SK-N-SH (cell line): ENCODE measurements at regions of chr19 and their contacts with region 1.

Region 1: DNA sequence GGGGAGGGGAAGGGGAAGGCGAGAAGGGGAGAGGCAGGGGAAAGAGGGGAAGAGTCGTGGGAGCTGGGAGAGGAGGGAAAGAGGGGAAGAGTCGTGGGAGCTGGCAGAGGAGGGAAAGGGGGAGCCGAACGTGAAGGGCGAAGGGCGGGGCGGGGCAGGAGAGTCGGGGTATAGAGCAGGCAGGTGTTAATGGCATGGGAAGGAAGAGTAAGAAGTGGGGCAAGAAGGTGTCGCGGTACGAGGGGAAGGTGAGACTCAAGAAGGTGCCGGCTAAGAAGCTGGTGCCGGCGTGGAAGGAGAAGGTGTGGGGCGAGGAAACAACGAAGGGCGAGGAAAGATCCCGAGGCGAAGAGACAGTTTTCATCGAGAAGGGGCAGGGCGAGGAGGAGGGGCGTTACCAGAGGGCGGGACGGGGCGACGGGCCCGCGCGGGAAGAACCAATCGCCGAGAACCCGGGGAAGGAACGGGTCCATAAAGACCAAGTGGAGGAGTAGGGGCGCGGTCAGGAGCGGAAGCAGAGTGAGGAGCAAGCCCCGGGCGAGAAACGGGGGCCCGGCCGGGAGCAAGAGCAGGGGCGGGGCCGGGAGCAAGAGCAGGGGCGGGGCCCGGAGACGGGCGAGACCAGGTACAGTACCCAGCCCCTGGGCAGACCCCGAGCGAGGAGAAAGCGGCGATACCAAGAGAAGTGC is 463 bp downstream of the CATSPERG start:
- DNase-seq: peak; percentile 92
- H3K4me3 ChIP-seq: peak overlapping the region; percentile 68 to 96
- H3K27ac ChIP-seq: peak overlapping the region; percentile 82 to 86
- H3K4me1 ChIP-seq: peaks cover 0 to 8% of the 10 kb centered on the region in 2 experiments; a peak in 1 of 4 replicates
- H3K27me3 ChIP-seq: no peaks in the 10 kb centered on the region
- CTCF ChIP-seq: no peak
- EP300 ChIP-seq: no peak
- RAD21 ChIP-seq: no peak

Region 2: DNA sequence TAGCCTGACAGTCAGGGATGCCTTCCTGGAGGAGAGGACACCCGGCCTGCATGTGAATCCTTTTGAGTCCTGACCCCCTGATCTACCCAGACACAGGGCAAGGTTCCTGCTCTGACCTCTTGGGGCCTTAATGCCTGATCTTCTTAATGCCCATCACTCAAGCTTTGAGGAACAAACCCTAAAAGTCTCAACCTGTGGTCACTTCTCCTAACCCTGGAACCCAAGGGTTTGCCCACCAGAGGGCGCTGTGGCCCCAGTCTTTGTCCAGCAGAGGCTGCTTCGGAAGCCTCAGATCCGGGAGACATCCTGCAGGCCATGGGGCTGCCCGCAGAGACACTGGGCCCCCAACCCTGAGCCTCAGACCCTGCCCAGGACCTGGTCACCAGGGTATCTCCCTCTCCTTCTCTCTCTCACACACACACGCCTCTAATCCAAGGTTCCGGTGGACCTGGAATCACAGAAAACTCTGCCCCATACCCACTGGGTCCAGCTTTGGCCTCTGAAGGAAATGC is 102.3 kb before region 1 on chr19:
- CTCF ChIA-PET with region 1: interaction called, 31 read pairs
- POLR2A ChIA-PET with region 1: no interaction called
- DNase-seq: peak; percentile 88
- H3K4me3 ChIP-seq: no peak overlapping the region; a peak in 1 of 4 replicates
- H3K27ac ChIP-seq: no peak overlapping the region
- H3K4me1 ChIP-seq: peaks cover 0 to 1% of the 10 kb centered on the region in 2 experiments; a peak in 1 of 4 replicates
- H3K27me3 ChIP-seq: no peaks in the 10 kb centered on the region
- CTCF ChIP-seq: peak; percentile 83
- EP300 ChIP-seq: no peak
- RAD21 ChIP-seq: peak; percentile 84

Region 3: GRCh38 chr19:38245826-38246498 is 90.1 kb before region 1 on chr19:
- CTCF ChIA-PET with region 1: interaction called, 76 read pairs
- POLR2A ChIA-PET with region 1: no interaction called
- DNase-seq: no peak
- H3K4me3 ChIP-seq: no peak overlapping the region
- H3K27ac ChIP-seq: no peak overlapping the region
- H3K4me1 ChIP-seq: peaks cover 0 to 1% of the 10 kb centered on the region in 2 experiments; a peak in 1 of 4 replicates
- H3K27me3 ChIP-seq: no peaks in the 10 kb centered on the region
- CTCF ChIP-seq: no peak
- EP300 ChIP-seq: no peak
- RAD21 ChIP-seq: no peak

Region 4: GRCh38 chr19:38250821-38251563 is 85.1 kb before region 1 on chr19:
- CTCF ChIA-PET with region 1: interaction called, 76 read pairs
- POLR2A ChIA-PET with region 1: no interaction called
- DNase-seq: no peak
- H3K4me3 ChIP-seq: no peak overlapping the region
- H3K27ac ChIP-seq: no peak overlapping the region
- H3K4me1 ChIP-seq: peaks cover 0 to 16% of the 10 kb centered on the region in 2 experiments; a peak in 2 of 4 replicates
- H3K27me3 ChIP-seq: no peaks in the 10 kb centered on the region; the same call in 1 of the 2 replicates
- CTCF ChIP-seq: no peak
- EP300 ChIP-seq: no peak
- RAD21 ChIP-seq: no peak

Region 5: DNA sequence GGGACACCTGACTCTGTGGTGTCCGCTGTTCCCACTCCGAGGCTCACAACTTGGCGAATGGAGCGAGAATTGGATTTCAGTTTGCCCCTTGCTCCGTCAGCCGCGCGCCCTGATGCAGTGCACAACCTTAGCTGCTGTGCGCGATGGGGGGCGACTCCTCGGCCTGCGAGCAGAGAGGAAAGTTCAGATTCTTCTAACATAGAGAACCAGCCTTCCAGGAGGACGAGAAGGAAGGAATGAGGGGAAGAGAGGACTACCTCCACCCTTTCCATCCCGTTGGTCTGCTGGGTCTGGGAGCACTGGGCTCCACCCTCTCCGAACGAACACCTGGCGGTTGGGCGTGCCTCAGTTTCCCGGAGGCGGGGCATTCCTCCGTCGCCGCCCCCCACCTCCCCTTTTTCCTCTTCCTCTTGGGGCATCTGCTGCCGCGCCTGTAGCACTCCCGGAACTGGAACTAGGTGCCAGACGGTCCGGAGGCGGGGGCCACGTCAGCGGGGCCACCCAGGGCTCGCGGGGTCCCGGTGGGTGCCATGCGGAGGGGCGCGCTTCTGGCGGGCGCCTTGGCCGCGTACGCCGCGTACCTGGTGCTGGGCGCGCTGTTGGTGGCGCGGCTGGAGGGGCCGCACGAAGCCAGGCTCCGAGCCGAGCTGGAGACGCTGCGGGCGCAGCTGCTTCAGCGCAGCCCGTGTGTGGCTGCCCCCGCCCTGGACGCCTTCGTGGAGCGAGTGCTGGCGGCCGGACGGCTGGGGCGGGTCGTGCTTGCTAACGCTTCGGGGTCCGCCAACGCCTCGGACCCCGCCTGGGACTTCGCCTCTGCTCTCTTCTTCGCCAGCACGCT is 16.5 kb before region 1 on chr19 and contains the start of gene KCNK6:
- CTCF ChIA-PET with region 1: interaction called, 20 read pairs
- POLR2A ChIA-PET with region 1: no interaction called
- DNase-seq: peak; percentile 72
- H3K4me3 ChIP-seq: peak within 1 kb of the TSS; percentile 47 to 64
- H3K27ac ChIP-seq: no peak within 1 kb of the TSS
- H3K4me1 ChIP-seq: peaks cover 0 to 24% of the 10 kb centered on the region in 2 experiments; a peak in 1 of 4 replicates
- H3K27me3 ChIP-seq: 0 out of 2 replicates have a peak, but pooled peaks cover 15% of the 10 kb centered on the region
- CTCF ChIP-seq: no peak
- EP300 ChIP-seq: no peak
- RAD21 ChIP-seq: no peak
- polyA plus RNA-seq, gene KCNK6: 0.26 and 0.29 TPM in 2 replicates

Region 6: GRCh38 chr19:38351865-38352395 is 15.8 kb after region 1 on chr19:
- CTCF ChIA-PET with region 1: interaction called, 10 read pairs
- POLR2A ChIA-PET with region 1: interaction called, 3 read pairs
- DNase-seq: no peak
- H3K4me3 ChIP-seq: no peak overlapping the region
- H3K27ac ChIP-seq: no peak overlapping the region
- H3K4me1 ChIP-seq: no peaks in the 10 kb centered on the region; a peak in 1 of 4 replicates
- H3K27me3 ChIP-seq: 0 out of 2 replicates have a peak, but pooled peaks cover 5% of the 10 kb centered on the region
- CTCF ChIP-seq: no peak
- EP300 ChIP-seq: no peak
- RAD21 ChIP-seq: no peak

Region 7: DNA sequence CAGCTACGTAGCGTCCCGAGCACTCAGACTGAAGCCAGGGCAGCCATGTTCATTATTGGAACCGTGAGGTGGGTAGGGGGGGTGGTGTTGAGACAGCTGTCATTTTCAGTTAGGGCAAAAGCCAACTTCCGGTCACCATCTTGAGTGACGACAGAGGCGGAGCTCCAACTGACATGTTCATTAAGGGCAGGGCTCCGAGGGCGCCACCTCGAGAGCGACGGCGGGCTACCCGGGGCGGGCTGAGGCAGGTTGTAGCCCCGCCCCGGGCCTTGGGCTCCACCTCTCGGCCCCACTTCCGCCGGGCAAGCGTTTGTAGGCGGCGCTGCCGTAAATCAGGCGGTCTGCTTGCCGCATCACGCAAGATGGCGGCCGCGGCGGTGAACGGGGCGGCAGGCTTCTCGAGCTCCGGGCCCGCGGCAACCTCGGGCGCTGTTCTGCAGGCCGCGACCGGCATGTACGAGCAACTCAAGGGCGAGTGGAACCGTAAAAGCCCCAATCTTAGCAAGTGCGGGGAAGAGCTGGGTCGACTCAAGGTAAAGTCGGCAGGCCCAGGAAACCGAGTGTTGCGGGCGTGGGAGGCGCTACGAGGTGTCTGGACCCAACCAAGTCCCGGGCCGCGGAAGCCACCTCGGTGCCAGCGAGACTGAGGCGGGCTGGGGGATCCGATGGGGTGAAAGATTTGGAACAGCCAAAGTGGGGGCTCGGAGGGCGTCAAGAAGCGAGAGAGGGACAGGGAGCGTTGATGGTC is 38.5 kb after region 1 on chr19 and contains the start of gene PSMD8:
- CTCF ChIA-PET with region 1: interaction called, 12 read pairs
- POLR2A ChIA-PET with region 1: interaction called, 10 read pairs
- DNase-seq: peak; percentile 98
- H3K4me3 ChIP-seq: peak within 1 kb of the TSS; percentile 68 to 91
- H3K27ac ChIP-seq: peak within 1 kb of the TSS; percentile 82 to 87
- H3K4me1 ChIP-seq: peaks cover 6 to 14% of the 10 kb centered on the region in 2 experiments; a peak in 3 of 4 replicates
- H3K27me3 ChIP-seq: no peaks in the 10 kb centered on the region
- CTCF ChIP-seq: peak; percentile 22; the same call in 1 of the 2 replicates
- EP300 ChIP-seq: no peak
- RAD21 ChIP-seq: no peak
- polyA plus RNA-seq, gene PSMD8: 400 and 453 TPM in 2 replicates